ENCODE measurements at regions of chr1 and their contacts with region 1.

Region 1: DNA sequence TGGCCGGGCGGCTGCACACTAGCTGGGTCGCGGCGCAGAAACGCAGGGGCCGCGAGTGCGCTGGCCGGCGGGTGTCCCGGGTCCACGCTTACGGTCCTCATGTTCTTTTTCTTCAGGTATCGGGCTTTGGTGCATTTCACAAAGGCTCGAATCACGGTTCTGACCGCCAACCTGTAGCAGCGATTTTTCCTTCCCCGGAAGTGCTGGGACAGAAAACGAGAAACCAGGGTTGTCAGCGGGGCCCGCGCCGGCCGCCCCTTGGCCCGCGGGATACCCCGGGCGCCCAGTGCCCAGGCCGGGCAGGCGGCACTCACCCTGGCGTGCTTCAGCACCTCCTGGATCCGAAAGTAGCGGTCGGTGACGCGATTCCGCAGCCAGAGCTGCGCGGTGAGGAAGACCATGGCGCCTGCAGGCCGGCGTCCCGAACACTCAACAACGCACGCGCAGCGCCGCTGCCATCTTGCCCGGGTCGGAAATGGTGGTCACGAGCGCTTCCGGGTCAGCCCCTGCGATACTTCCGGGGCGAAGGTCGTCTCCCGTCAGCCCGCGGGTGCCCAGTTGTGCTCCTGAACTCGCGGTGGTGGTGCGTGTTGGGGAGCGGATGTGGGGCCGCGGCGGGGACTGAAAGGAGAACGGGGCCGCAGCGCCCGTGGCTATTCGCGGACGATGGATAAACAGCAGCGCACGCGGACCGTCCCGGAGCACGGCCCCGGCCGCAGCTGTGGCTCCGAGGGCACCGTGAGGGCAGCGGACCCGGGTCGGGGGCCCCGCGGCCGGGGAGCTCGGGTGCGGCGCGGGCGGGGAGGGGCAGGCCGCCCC is at the start of gene MRPL20:
- DNase-seq: peak; percentile 86 to 87
- ATAC-seq: peak; percentile 97
- H3K4me3 ChIP-seq: peak within 1 kb of the TSS; percentile 69
- H3K27ac ChIP-seq: peak within 1 kb of the TSS; percentile 88 to 100
- H3K4me1 ChIP-seq: peaks cover 26% of the 10 kb centered on the region
- CTCF ChIP-seq: no peak
- EP300 ChIP-seq: no peak
- POLR2A ChIP-seq: peak; percentile 76
- RAD21 ChIP-seq: no peak
- polyA plus RNA-seq, gene MRPL20: 146 and 163 TPM in 2 replicates

Region 2: DNA sequence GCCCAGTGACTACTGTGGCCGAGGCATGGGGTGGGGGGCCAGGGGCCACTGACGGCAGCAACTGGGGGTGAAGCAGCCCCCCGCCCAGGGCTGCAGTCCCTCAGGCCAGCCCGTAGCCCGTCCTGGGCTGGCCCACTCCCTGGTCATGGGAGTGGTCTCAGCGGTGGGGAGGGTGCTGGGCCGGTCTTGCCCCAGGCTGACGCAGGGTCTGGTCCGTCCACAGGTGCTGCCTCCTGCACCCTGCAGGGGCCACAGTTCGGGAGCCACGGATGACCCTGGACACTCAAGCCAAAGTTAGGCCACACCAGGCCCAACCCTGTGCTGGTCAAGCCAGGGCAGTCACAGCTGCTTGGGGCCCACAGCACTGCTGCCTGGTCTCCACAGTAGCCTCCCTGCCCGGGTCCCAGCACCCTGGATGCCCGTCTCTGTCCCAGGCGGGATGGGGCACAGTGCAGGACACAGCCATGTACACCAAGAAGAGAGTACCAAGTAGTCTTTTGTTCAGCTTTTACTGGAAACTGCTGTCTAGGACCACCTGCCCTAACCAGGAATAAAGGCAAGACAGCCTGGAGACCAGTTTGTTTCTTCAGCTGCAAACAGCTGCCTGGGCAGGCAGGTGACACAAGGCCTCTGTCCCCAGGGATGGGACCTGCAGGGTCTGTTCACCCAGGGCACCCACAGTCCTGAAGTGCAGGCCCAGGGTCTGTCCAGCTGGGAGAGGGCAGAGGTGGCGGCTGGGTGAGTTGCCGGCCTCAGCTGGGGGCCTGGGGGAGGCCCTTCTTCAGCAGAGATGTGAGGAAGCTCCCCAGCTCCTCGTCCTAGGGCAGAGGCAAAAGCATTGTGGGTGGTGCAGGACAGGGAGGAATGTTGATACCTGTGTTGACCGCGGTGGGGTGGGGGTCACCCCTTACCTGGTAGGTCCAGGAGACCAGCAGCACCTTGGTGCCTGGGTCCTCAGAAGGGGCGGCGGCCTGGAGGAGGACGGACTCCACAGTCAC is 95.6 kb before region 1 on chr1:
- CTCF ChIA-PET with region 1: no interaction called
- POLR2A ChIA-PET with region 1: no interaction called
- DNase-seq: no peak
- ATAC-seq: no peak
- H3K4me3 ChIP-seq: no peak overlapping the region
- H3K27ac ChIP-seq: no peak overlapping the region
- H3K4me1 ChIP-seq: peaks cover 16% of the 10 kb centered on the region
- CTCF ChIP-seq: no peak
- EP300 ChIP-seq: no peak
- POLR2A ChIP-seq: no peak
- RAD21 ChIP-seq: no peak

Region 3: DNA sequence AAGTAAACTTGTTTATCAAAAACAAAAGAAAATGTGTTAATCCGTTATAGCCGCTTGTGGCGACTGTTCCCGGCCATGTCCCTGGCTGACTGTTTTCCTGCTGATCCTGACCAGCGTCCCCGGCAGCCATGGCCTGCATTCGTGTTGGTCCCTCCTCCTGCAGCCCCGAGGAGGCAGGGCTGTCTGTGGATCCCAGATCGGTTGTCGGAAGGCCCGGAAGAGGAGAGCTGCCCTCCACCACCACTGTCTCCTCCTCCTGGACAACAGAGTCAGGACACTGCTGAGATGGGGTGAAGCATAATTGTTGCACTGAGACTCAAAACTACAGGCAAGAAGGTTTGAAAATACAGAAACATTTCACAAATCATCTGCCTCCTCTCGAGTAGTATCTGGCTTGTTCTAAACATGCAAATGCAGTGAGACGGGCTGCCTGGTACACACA is 45.0 kb before region 1 on chr1:
- CTCF ChIA-PET with region 1: no interaction called
- POLR2A ChIA-PET with region 1: no interaction called
- DNase-seq: no peak
- ATAC-seq: peak in 1 of 2 experiments; percentile 53; a peak in 3 of 6 replicates
- H3K4me3 ChIP-seq: no peak overlapping the region
- H3K27ac ChIP-seq: no peak overlapping the region; a peak in 1 of 6 replicates
- H3K4me1 ChIP-seq: peaks cover 9% of the 10 kb centered on the region; the same call in 2 of the 3 replicates
- CTCF ChIP-seq: no peak
- EP300 ChIP-seq: no peak
- POLR2A ChIP-seq: no peak
- RAD21 ChIP-seq: no peak

Region 4: GRCh38 chr1:1510912-1511532 is 104.0 kb after region 1 on chr1:
- CTCF ChIA-PET with region 1: interaction called, 11 read pairs
- POLR2A ChIA-PET with region 1: no interaction called
- DNase-seq: peak in 1 of 2 experiments; percentile 38
- ATAC-seq: peak in 1 of 2 experiments; percentile 42; a peak in 5 of 6 replicates
- H3K4me3 ChIP-seq: peak overlapping the region; percentile 98
- H3K27ac ChIP-seq: peak overlapping the region; percentile 97 to 99
- H3K4me1 ChIP-seq: peaks cover 5% of the 10 kb centered on the region; the same call in 2 of the 3 replicates
- CTCF ChIP-seq: no peak
- EP300 ChIP-seq: no peak
- POLR2A ChIP-seq: no peak
- RAD21 ChIP-seq: no peak

Measured in A549 (cell line).